ENCODE measurements at regions of chr16 and their contacts with region 1.

Region 1: DNA sequence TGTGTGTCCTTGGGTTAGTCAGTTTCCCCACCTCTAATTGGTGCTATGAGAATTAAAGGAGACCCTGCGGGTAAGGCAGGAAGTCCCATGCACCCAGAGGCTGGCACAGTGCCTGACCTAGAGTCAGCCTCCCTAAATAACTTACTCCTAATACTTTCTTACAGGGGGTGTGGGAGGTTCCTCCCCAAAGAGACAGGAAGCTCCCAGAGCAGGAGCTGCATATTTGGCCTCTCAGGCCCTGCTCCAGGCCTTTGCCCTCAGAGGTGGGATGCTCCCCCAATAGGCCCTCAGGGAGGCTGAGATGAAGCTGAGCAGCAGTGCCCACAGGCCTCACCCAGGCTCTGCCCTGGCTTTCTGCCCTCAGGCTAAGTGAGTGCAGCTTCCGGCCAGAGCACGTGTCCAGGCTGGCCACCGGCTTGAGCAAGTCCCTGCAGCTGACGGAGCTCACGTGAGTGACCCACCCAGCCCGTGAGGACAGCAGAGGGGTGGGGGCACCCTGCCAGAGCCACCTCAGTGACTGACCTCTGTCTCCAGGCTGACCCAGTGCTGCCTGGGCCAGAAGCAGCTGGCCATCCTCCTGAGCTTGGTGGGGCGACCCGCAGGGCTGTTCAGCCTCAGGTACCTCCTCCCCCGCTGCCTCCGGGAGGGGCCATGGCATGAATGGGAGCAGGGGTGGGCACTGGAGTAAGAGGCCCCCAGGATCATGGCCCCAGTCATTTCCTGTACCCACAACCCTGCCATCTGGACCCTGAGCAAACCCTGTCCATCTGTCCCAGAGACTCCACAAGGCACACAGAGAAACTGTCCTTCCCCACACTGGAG is 31.1 kb upstream of the CPNE2 start:
- DNase-seq: no peak
- H3K4me3 ChIP-seq: no peak overlapping the region
- H3K27ac ChIP-seq: no peak overlapping the region
- H3K27me3 ChIP-seq: no peaks in the 10 kb centered on the region
- CTCF ChIP-seq: no peak

Region 2: GRCh38 chr16:56869513-56870275 is 191.6 kb before region 1 on chr16:
- CTCF ChIA-PET with region 1: no interaction called
- POLR2A ChIA-PET with region 1: no interaction called
- DNase-seq: no peak
- H3K4me3 ChIP-seq: no peak overlapping the region
- H3K27ac ChIP-seq: no peak overlapping the region
- H3K27me3 ChIP-seq: no peaks in the 10 kb centered on the region
- CTCF ChIP-seq: peak; percentile 8; the same call in 1 of the 2 replicates

Region 3: DNA sequence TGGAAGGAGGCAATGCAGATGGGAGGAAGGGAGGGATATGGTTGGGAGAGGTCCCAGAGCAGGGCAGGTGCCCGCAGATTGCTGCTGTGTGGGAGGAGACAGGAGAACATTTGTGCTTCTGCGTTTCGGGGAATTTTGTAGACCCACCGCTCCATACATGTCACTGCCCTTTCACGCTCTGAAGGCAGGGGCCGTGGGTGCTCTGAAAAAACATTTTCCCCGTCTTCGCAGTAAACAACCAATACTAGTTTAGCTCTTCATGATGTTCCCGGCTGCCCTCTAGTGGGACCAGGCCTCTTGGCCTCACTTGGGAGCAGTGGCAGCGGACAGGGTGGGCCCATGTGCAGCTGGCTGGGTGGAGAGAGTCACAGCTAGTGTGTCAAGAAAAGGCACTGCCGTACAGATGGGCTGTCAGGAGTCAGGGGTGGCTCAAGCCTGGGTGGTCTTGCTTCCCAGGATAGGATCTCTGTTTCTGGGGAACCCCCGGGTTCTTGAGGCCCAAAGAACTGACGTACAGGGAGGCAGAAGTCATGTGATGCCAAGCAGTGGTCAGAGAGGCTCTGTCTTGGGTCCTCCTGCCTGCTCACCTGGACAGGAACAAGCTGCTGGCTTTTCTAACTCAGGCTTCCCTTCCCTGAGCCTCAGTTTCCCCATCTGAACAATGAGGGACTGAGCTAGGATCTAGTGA is 15.5 kb before region 1 on chr16:
- CTCF ChIA-PET with region 1: interaction called, 11 read pairs
- POLR2A ChIA-PET with region 1: interaction called, 3 read pairs
- DNase-seq: peak; percentile 26
- H3K4me3 ChIP-seq: no peak overlapping the region
- H3K27ac ChIP-seq: no peak overlapping the region
- H3K27me3 ChIP-seq: no peaks in the 10 kb centered on the region
- CTCF ChIP-seq: peak; percentile 87

Measured in AG04450 (cell line).